Activated naive CD4-positive, alpha-beta T cell treated with anti-CD3 and anti-CD28 coated beads, Interleukin-2, amount 10 ng/mL, durations not matched to agents 7 days and 5 days (primary cell): ENCODE measurements at regions of chr15 and their contacts with region 1.

Region 1: GRCh38 chr15:44501768-44502366 is 35.1 kb upstream of the EIF3J start:
- DNase-seq: no peak
- H3K4me3 Mint-ChIP-seq: no peak overlapping the region
- H3K27ac Mint-ChIP-seq: no peak overlapping the region
- H3K4me1 Mint-ChIP-seq: no peaks in the 10 kb centered on the region
- H3K27me3 Mint-ChIP-seq: no peaks in the 10 kb centered on the region

Region 2: DNA sequence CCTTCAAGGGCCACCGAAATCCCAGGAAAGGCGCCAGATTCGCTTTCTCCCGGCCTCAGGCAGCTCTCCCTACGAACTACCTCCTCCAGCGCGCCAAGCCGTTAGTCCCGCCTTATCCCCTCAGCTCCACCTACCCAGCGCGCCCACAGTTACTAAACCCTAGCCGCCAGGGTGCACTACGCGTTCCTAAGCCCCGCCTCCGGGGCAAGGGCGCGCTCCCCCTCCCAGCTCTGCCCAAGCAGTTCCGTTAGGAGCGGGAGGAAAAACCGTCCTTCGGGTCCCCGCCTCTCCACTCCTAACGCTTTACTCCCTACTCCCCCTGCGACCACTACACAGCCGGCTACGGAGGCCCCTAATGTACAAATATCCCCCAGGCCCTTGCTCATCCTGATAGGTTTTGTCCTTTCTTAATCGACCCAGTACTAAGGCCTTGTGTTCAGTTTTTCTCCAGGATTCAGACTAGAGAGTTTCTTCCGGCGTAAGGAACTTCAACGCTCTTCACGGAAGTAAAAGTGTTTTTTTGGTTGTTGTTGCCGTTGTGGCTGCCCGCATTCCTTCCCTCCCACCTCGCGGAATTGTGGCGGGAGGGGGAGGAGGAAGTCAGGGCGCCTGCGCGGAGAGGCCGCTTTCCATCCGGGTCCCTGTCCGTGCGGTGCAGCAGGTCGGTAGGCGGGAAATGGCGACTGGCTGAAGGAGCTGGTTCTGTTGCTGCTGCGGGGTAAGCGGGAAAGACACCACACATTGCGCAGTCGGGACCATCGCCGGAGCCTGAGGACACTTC is 74.7 kb before region 1 on chr15 and contains the start of gene CTDSPL2:
- CTCF ChIA-PET with region 1: interaction called, 12 read pairs
- DNase-seq: peak; percentile 97
- H3K4me3 Mint-ChIP-seq: peak within 1 kb of the TSS; percentile 99
- H3K27ac Mint-ChIP-seq: peak within 1 kb of the TSS; percentile 100
- H3K4me1 Mint-ChIP-seq: peaks cover 49% of the 10 kb centered on the region
- H3K27me3 Mint-ChIP-seq: peaks cover 7% of the 10 kb centered on the region

Region 3: GRCh38 chr15:44554934-44555723 is 53.3 kb after region 1 on chr15:
- CTCF ChIA-PET with region 1: no interaction called
- DNase-seq: peak; percentile 36
- H3K4me3 Mint-ChIP-seq: no peak overlapping the region
- H3K27ac Mint-ChIP-seq: peak overlapping the region; percentile 79
- H3K4me1 Mint-ChIP-seq: peaks cover 27% of the 10 kb centered on the region
- H3K27me3 Mint-ChIP-seq: no peaks in the 10 kb centered on the region